GM18951 (cell line): ENCODE measurements at regions of chr9 and their contacts with region 1.

Region 1: GRCh38 chr9:131739980-131740648 is at the start of gene RAPGEF1:
- POLR2A ChIP-seq: no peak

Region 2: DNA sequence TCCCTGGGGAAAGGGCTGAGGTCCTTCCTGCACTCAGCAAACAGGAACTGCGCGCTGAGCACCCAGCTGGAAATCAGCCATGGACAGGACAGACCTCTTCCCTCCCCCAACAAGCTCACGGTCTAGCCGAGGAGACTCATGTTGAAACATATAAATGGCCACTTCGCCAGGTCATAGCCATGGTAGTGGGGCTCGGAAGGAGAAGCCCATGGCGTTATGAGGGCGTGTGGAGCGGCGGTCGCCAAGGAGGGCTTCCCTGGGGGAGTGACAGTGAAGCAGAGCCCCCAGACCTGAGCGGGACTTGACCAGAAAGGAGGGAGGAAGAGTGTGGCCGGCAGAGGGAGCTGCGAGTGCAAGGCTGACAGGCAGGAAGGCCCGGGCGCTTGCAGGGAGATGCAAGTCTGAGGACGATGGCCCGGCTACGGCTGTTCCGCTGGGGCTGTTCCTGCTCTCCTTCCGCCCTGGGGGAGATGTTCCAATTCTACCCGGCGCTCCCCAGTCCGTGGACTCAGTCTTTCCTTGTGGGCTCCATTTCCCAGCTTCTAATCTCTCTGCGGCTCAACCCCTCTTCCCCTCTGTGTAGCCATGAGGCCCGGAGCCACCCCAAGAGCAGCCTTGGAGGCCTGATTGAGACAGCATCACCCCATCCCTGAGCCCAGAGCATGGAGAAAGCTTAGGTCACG is 390.1 kb before region 1 on chr9:
- in situ Hi-C with region 1: loop called (anchors 10 kb)
- POLR2A ChIP-seq: no peak

Region 3: DNA sequence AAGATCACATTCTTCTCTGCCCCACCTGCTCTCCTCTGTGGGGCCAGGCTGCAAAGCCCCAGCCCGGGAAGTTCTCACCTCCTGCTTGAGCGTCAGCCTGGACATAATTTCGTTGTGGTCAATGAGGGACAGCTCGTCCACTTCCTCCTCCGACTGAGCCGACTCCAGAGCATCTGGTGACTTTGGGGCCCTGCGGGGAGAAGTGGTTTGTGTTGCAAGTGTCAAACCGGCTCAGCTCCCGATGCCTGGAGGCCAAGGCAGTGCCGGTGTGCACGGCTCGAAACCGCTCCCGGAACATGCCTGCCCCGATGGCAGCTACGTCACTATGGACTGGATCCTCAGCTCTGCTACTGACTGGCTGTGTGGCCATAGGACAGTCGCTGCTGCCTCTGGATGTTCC is 142.0 kb before region 1 on chr9:
- in situ Hi-C with region 1: loop called (anchors 5 kb)
- POLR2A ChIP-seq: no peak